Psoas muscle (tissue), 8 donors: ENCODE measurements at regions of chrX and their contacts with region 1.

Region 1: GRCh38 chrX:73850124-73851013 is 287.4 kb downstream of the CHIC1 start:
- DNase-seq: peak; percentile 55 to 77
- ATAC-seq: peak in 2 of 4 donors; percentile 33 to 35
- H3K4me3 ChIP-seq: peak overlapping the region; percentile 73
- H3K27ac ChIP-seq: peak overlapping the region; percentile 64
- H3K4me1 ChIP-seq: peaks cover 2% of the 10 kb centered on the region
- H3K27me3 ChIP-seq: no peaks in the 10 kb centered on the region
- CTCF ChIP-seq: no peak

Region 2: DNA sequence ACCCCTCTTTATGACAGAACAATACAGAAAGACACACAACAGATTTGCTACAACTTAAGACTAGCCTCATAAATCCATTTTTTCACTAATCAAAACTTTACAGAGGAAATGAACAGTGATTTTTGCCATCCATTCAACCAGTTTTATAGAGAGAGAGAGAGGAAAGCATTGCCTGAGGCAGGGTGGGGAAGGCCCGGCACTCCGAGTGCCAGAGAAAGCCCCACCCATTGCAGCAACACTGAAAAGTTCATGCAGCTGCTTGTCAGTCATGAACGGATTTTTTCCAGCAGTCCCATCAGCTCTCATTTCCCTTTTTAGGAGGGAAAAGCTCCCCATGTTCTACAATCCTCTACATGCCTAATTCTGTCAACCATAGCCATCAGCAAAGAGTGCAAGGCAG is 50.5 kb before region 1 on chrX:
- intact Hi-C with region 1: no loop called
- DNase-seq: no peak
- ATAC-seq: no peak
- H3K4me3 ChIP-seq: no peak overlapping the region
- H3K27ac ChIP-seq: no peak overlapping the region
- H3K4me1 ChIP-seq: no peaks in the 10 kb centered on the region
- H3K27me3 ChIP-seq: peaks cover 0 to 16% (median 0%) of the 10 kb centered on the region in 3 donors
- CTCF ChIP-seq: no peak

Region 3: GRCh38 chrX:73943693-73944562 is 93.6 kb after region 1 on chrX:
- intact Hi-C with region 1: loop called (anchors 5 kb)
- DNase-seq: peak; percentile 89 to 94
- ATAC-seq: peak; percentile 100
- H3K4me3 ChIP-seq: peak overlapping the region; percentile 96
- H3K27ac ChIP-seq: peak overlapping the region; percentile 92
- H3K4me1 ChIP-seq: peaks cover 8% of the 10 kb centered on the region
- H3K27me3 ChIP-seq: no peaks in the 10 kb centered on the region
- CTCF ChIP-seq: no peak

Region 4: GRCh38 chrX:74133156-74133796 is 282.9 kb after region 1 on chrX:
- intact Hi-C with region 1: loop called (anchors 5 kb)
- DNase-seq: no peak
- ATAC-seq: peak; percentile 76 to 92 (median 79)
- H3K4me3 ChIP-seq: no peak overlapping the region
- H3K27ac ChIP-seq: no peak overlapping the region
- H3K4me1 ChIP-seq: no peaks in the 10 kb centered on the region
- H3K27me3 ChIP-seq: peaks cover 0 to 8% (median 0%) of the 10 kb centered on the region in 3 donors
- CTCF ChIP-seq: peak; percentile 83

Region 5: DNA sequence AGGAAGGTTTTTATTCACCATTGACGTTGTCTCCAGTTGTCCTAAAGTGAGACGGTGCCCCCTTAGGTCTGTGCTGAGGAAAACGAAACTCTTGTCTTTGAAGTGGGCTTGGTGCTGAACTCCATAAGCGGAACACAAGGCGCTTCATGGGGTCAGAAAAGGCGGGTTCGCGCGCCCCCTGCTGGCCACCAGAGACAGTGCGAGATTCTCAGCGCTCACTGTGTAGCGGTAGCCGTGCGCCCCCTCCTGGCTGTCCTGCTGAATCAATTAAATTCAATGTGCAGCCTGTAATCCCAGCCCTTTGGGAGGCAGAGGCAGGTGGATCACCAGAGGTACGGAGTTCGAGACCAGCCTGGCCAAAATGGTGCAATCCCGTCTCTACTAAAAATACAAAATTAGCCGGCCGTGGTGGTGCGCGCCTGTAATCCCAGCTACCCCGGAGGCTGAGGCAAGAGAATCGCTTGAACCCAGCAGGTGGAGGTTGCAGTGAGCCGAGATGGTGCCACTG is 700.0 kb after region 1 on chrX:
- intact Hi-C with region 1: loop called in 1 of 2 experiments (anchors 5 kb)
- DNase-seq: peak; percentile 84 to 92
- ATAC-seq: peak; percentile 93 to 98 (median 95)
- H3K4me3 ChIP-seq: no peak overlapping the region
- H3K27ac ChIP-seq: no peak overlapping the region
- H3K4me1 ChIP-seq: no peaks in the 10 kb centered on the region
- H3K27me3 ChIP-seq: peaks cover 0 to 8% (median 0%) of the 10 kb centered on the region in 3 donors
- CTCF ChIP-seq: peak; percentile 93